OCI-LY7 (cell line): ENCODE measurements at regions of chr7 and their contacts with region 1.

Region 1: GRCh38 chr7:7103343-7104313 is 78.7 kb upstream of the C1GALT1 start:
- DNase-seq: peak; percentile 65
- H3K4me3 ChIP-seq: no peak overlapping the region
- H3K27ac ChIP-seq: no peak overlapping the region
- H3K4me1 ChIP-seq: no peaks in the 10 kb centered on the region
- CTCF ChIP-seq: peak; percentile 82

Region 2: GRCh38 chr7:7304705-7305450 is 201.2 kb after region 1 on chr7:
- CTCF ChIA-PET with region 1: no interaction called
- POLR2A ChIA-PET with region 1: no interaction called
- intact Hi-C with region 1: loop called (anchors 10 kb)
- DNase-seq: no peak
- H3K4me3 ChIP-seq: no peak overlapping the region
- H3K27ac ChIP-seq: no peak overlapping the region
- H3K4me1 ChIP-seq: no peaks in the 10 kb centered on the region
- CTCF ChIP-seq: no peak

Region 3: GRCh38 chr7:7424151-7424873 is 320.7 kb after region 1 on chr7:
- CTCF ChIA-PET with region 1: no interaction called
- POLR2A ChIA-PET with region 1: no interaction called
- intact Hi-C with region 1: loop called (anchors 5 kb)
- DNase-seq: peak; percentile 65
- H3K4me3 ChIP-seq: peak overlapping the region; percentile 63
- H3K27ac ChIP-seq: no peak overlapping the region
- H3K4me1 ChIP-seq: no peaks in the 10 kb centered on the region
- CTCF ChIP-seq: peak; percentile 82

Region 4: GRCh38 chr7:7542251-7542835 is 438.7 kb after region 1 on chr7:
- CTCF ChIA-PET with region 1: no interaction called
- POLR2A ChIA-PET with region 1: no interaction called
- intact Hi-C with region 1: loop called (anchors 2 kb)
- DNase-seq: no peak
- H3K4me3 ChIP-seq: no peak overlapping the region
- H3K27ac ChIP-seq: no peak overlapping the region
- H3K4me1 ChIP-seq: no peaks in the 10 kb centered on the region
- CTCF ChIP-seq: no peak

Region 5: DNA sequence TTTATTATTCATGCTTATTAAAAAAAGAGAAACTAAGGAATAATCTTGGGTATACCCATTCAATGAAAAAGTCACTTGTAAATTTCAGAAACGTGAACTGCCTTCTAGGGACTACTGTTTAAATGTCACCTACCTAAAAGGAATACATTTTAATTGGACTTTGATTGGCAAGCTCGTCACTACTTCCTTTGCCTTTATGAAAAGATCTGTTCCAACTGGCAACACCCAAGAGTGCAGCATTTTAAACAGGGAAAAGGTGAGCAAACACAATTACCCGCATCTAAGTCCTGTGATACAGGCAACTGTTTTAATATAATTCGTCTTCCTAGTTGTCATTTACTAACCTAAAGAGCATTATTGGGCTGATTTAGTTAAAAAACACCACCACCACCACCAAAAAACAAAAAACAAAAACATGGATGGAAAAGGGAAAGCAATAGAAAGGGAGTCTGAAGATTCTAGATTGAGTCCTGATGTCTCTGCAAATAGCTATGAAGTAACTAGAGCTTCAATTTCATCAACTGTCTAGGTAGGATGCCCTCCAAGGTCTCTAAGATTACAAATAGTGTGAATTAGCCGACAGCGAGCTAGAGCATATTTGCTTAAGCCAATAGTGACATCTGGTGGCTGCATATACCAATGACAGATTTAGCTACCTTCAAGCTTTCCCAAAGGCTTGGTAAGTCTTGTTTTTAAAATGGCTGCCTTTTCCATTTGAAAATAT is 1192.2 kb after region 1 on chr7:
- CTCF ChIA-PET with region 1: no interaction called
- POLR2A ChIA-PET with region 1: no interaction called
- intact Hi-C with region 1: loop called (anchors 5 kb)
- DNase-seq: peak; percentile 79
- H3K4me3 ChIP-seq: no peak overlapping the region
- H3K27ac ChIP-seq: no peak overlapping the region
- H3K4me1 ChIP-seq: no peaks in the 10 kb centered on the region
- CTCF ChIP-seq: peak; percentile 87